ENCODE measurements at regions of chr4 and their contacts with region 1.

Region 1: GRCh38 chr4:94603170-94603747 is 151.5 kb downstream of the PDLIM5 start:
- DNase-seq: no peak
- H3K4me3 ChIP-seq: no peak overlapping the region
- H3K27ac ChIP-seq: no peak overlapping the region
- H3K4me1 ChIP-seq: no peaks in the 10 kb centered on the region
- H3K27me3 ChIP-seq: no peaks in the 10 kb centered on the region
- CTCF ChIP-seq: no peak
- EP300 ChIP-seq: no peak
- POLR2A ChIP-seq: no peak

Region 2: GRCh38 chr4:94406668-94407437 is 196.4 kb before region 1 on chr4:
- in situ Hi-C with region 1: loop called (anchors 5 to 10 kb)
- intact Hi-C with region 1: no loop called
- DNase-seq: peak; percentile 74
- H3K4me3 ChIP-seq: no peak overlapping the region
- H3K27ac ChIP-seq: no peak overlapping the region
- H3K4me1 ChIP-seq: no peaks in the 10 kb centered on the region
- H3K27me3 ChIP-seq: no peaks in the 10 kb centered on the region
- CTCF ChIP-seq: peak; percentile 70 to 91 (median 81)
- EP300 ChIP-seq: no peak
- POLR2A ChIP-seq: no peak

Region 3: DNA sequence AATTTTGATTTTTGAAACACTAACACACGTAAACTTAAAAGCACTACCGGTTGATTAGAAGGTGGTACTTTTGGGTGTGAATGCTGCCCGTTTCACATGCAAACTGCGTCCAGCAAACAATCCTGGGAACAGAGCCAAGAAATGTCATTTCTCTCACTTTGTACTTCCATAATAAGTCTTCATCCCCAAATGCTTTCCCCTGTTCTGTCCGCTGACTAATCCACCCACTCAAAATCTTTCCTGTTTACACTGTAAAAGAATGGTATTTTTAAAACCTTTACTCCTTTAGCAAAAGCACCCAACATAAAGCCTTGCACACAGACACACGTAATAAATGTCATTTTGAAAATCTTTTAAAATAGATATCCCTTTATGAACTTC is 190.6 kb before region 1 on chr4:
- in situ Hi-C with region 1: loop called (anchors 5 to 10 kb)
- intact Hi-C with region 1: no loop called
- DNase-seq: no peak
- H3K4me3 ChIP-seq: no peak overlapping the region
- H3K27ac ChIP-seq: peak overlapping the region in 1 of 4 donors; percentile 44
- H3K4me1 ChIP-seq: peaks cover 0 to 13% (median 3%) of the 10 kb centered on the region in 4 donors
- H3K27me3 ChIP-seq: no peaks in the 10 kb centered on the region
- CTCF ChIP-seq: no peak
- EP300 ChIP-seq: no peak
- POLR2A ChIP-seq: no peak

Region 4: DNA sequence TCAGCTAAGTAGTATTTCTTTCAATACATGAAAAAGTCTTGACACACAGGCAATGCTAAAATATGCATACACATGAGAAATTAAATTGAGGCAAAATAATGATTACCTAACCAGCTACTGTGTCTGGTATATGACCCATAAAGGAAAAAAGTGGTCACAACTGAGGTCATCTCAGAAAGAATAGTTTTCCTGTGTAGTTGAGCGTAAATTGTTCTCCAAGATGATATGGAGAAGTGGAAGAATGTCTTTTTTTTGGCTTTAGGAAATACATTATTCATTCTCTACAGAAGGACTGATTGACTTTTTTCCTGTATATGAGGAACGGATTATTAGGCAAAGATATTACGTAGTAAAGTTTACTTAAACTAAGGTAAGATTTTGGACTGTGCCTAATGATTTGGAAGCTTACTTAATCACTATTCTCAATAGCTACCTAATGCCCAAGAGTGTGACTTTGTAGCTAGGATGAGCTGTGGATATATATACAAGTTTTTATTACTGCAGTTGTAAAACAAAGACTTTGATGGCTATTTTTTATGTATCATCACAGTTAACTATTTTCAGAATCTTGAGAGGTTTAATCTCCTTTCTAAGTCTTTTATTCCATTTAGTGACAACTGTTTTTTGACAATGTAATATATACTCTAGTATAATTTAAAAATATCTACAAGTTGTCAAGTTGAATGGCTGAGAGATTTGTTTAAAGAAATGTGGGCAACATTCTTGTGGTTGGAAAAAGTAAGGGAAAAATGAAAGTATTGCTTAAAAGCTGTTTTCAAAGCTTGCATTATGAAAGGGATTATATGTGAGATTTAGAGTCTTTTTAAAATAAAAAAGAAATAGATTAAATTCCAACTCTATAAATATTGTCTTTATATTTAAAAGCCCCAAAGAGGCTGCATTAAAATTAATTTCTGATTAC is 51.4 kb before region 1 on chr4:
- in situ Hi-C with region 1: no loop called
- intact Hi-C with region 1: no loop called
- DNase-seq: no peak
- H3K4me3 ChIP-seq: no peak overlapping the region
- H3K27ac ChIP-seq: no peak overlapping the region
- H3K4me1 ChIP-seq: peaks cover 0 to 13% (median 6%) of the 10 kb centered on the region in 4 donors
- H3K27me3 ChIP-seq: no peaks in the 10 kb centered on the region
- CTCF ChIP-seq: no peak
- EP300 ChIP-seq: no peak
- POLR2A ChIP-seq: no peak

Region 5: DNA sequence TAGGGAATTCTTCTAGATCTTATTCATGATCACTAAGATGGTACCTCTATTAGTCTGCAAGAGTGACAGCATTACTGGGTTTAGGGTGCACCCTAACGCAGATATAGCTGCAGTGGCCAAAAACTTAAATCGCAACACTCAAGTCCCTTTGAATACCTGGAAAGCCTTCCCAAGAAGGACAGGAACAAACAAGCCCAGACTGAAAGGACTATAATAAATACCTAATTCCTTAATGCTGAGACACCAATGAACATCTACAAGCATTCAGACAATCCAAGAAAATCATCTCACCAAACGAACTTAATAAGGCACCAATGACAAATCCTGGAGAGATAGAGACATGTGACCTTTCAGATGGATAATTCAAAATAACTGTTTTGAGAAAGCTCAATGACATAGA is 1161.7 kb after region 1 on chr4:
- in situ Hi-C with region 1: no loop called
- intact Hi-C with region 1: no loop called
- DNase-seq: no peak
- H3K4me3 ChIP-seq: no peak overlapping the region
- H3K27ac ChIP-seq: no peak overlapping the region
- H3K4me1 ChIP-seq: no peaks in the 10 kb centered on the region
- H3K27me3 ChIP-seq: no peaks in the 10 kb centered on the region
- CTCF ChIP-seq: no peak
- EP300 ChIP-seq: no peak
- POLR2A ChIP-seq: no peak